Heart left ventricle (tissue), 16 donors: ENCODE measurements at regions of chr7 and their contacts with region 1.

Region 1: DNA sequence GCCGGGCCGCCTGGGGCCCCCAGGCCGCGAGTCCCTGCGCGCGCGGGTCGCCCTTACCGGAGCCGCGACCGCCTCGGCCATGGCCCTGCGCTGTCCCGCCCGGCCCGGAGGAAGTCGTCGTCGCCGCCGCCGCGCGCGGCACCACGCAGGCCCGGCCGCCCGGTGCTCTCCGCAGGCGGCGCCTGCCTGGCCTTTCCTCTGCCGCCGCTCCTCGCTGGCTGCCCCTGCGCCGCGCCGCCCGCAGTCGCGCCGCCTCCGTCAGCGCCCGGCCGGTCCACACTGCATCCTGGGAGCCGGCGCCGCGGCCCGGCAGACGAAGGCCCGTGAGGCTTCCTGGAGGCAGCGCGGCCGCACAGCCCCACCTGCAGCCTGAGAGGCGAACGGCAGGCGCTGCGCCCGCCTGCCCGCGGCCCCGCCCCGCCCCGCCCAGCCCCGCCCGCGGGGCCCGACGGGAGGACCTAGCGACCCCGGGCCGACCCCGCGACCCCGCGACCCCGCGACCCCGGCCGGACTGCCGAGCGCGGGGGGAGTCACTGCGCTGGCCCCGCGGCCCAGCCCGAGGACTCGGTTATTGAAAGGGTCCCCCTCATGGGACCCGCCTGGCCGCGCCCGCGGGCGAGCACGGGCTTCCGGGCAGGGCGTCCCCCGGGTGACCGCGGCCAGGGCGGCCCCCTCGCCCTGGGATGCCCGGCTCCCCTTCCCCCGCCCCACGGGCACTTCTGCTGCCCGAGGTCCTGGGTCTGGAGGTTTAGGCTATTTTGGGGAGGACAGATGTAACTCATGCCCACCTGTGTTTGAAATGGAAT is at the start of gene ZNF746:
- DNase-seq: peak; percentile 78 to 93 (median 85)
- ATAC-seq: peak; percentile 56 to 96 (median 91)
- H3K4me3 ChIP-seq: peak within 1 kb of the TSS; percentile 53 to 89 (median 75)
- H3K27ac ChIP-seq: peak within 1 kb of the TSS; percentile 67 to 90 (median 82)
- H3K4me1 ChIP-seq: peaks cover 0 to 30% (median 19%) of the 10 kb centered on the region in 12 donors
- H3K27me3 ChIP-seq: no peaks in the 10 kb centered on the region
- CTCF ChIP-seq: peak in 10 of 12 donors; percentile 26 to 90 (median 62)
- POLR2A ChIP-seq: peak in 1 of 2 donors; percentile 27
- total RNA-seq, gene ZNF746: 6.7 to 12.8 (median 8.8) TPM

Region 2: DNA sequence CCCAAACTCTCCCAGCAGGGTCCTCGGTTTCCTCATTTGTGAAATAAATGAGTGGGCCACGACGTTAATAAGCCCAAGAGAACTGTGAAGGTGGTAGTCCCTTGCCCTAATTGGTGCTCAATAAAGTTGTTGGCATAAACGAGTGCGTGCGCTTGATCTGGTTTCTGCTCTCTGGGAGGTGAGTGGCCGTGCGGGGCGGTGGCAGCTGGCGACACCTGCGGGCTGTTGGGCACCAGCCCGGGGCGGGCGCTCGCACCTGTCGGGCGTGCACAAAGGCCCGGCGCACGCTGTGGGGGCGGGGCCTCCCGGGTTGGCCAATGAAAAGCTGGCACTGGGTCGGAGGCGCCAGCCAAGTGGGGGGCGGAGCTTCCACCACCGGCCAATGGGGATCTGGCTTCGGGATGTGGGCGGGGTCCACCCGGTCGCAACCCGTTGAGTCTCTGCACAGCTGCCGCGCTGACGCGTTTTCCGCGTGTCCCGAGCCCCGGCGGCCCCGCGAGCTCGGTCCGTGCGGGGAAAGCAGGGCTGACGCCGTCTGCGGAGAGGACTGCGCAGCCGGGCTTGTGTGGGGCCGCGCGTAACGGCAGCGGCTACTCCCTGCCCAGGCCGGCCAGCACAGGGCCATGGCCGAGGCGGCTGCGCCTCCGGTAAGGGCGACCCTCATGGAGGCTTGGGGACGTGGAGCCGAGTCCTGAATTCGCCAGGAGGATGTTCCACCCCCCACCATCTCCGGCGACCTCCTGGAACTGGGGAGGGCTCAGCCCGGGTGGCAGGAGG is 212.6 kb before region 1 on chr7:
- intact Hi-C with region 1: loop called in 1 of 10 experiments (anchors 10 kb)
- DNase-seq: peak; percentile 94 to 97 (median 96)
- ATAC-seq: peak; percentile 96 to 99 (median 98)
- H3K4me3 ChIP-seq: peak overlapping the region; percentile 42 to 90 (median 68)
- H3K27ac ChIP-seq: peak overlapping the region in 5 of 12 donors; percentile 25 to 63 (median 58)
- H3K4me1 ChIP-seq: peaks cover 0 to 19% (median 7%) of the 10 kb centered on the region in 12 donors
- H3K27me3 ChIP-seq: no peaks in the 10 kb centered on the region
- CTCF ChIP-seq: peak in 2 of 12 donors; percentile 3 to 10
- POLR2A ChIP-seq: peak in 1 of 2 donors; percentile 27

Region 3: DNA sequence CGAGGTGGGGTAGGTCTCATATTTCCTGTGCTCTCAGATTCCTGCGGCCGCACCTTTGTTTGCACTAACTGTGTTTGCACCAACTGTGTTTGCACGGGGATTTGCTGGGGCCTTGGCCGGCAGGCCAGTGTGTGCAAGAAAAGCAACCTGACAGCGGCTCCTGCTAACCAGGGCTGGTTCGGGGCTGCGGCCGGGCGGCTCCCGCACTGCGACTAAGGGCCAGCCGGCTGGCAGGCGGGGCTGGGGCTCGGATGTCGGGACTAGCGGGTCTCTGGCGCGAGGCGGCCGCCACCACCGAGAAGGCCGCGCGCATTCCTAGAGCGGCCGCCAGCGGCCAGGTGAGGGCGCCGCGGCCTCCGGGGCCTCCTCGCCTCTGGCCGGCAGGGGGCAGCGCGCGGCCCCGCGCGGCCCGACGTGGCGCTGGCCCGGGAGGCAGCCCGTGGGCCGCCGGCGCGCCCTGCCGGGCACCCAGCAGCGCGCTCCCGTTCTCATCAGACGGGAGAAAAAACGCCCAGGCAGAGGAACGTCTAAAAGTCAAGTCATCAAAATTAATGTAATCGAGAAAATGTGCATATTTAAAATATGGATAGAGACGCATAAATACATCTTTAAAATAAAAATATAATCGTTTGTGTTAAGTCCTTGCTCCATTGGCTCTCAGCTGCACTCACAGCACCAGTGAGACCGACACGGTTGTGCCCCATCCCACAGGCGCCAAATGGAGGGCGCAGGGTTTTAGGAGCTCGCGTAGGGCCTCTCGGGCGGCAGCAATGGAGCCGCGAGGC is 75.3 kb before region 1 on chr7:
- intact Hi-C with region 1: loop called in 2 of 10 experiments (anchors 5 kb)
- DNase-seq: peak; percentile 60 to 85 (median 61)
- ATAC-seq: peak; percentile 60 to 97 (median 93)
- H3K4me3 ChIP-seq: peak overlapping the region; percentile 29 to 65 (median 54)
- H3K27ac ChIP-seq: peak overlapping the region in 7 of 12 donors; percentile 3 to 77 (median 33)
- H3K4me1 ChIP-seq: peaks cover 0 to 18% (median 7%) of the 10 kb centered on the region in 12 donors
- H3K27me3 ChIP-seq: no peaks in the 10 kb centered on the region
- CTCF ChIP-seq: peak; percentile 1 to 84 (median 52)
- POLR2A ChIP-seq: no peak

Region 4: DNA sequence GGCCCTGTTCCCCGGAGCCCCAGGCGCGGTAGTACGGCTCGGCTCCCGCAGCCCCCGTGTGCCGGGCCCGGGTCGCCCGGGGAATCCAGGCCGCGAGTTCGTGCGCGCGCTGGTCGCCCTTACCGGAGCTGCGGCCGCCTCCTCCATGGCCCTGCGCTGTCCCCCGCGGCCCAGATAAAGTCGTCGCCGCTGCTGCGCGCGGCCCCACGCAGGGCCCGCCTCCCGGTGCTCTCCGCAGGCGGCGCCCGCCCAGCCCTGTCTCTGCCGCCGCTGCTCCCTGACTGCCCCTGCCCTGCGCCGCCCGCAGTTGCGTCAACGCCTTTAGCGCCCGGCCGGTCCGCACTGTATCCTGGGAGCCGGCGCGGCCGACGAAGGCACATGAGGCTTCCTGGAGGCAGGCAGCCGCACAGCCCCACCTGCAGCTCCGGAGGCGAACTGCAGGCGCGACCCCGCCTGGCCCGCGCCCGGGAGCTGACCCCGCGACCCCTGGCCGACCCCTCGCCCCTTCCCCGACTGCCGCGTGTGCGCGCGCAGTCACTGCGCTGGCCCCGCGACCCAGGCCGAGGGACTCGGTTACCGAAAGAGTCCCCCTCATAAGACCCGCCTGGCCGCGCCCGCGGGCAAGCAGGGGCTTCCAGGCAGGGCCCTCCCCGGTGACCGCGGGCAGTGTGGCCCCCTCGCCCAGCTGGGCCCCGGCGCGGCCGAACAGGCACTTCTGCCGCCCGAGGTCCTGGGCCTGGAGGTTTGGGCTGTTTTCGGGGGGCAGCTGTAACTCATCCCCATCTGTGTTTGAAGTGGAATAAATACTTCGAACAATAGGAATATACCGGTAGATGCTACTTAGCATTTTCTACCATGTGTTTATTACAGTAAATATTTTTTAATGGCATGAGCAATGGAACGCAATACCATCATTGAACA is 127.0 kb after region 1 on chr7:
- intact Hi-C with region 1: loop called in 2 of 10 experiments (anchors 5 to 10 kb)
- DNase-seq: peak; percentile 93 to 98 (median 96)
- ATAC-seq: peak; percentile 96 to 98 (median 98)
- H3K4me3 ChIP-seq: peak overlapping the region; percentile 79 to 100 (median 97)
- H3K27ac ChIP-seq: peak overlapping the region; percentile 81 to 91 (median 89)
- H3K4me1 ChIP-seq: peaks cover 0 to 30% (median 21%) of the 10 kb centered on the region in 12 donors
- H3K27me3 ChIP-seq: no peaks in the 10 kb centered on the region
- CTCF ChIP-seq: peak in 11 of 12 donors; percentile 94 to 100 (median 99)
- POLR2A ChIP-seq: peak in 1 of 2 donors; percentile 73